ENCODE measurements at regions of chr19 and their contacts with region 1.

Region 1: GRCh38 chr19:44657211-44657921 is 13.7 kb downstream of the PVR start:
- DNase-seq: peak; percentile 80
- ATAC-seq: peak; percentile 78

Region 2: GRCh38 chr19:44570984-44571684 is 86.2 kb before region 1 on chr19:
- intact Hi-C with region 1: loop called (anchors 5 kb)
- DNase-seq: no peak
- ATAC-seq: peak; percentile 82